HCT116 (cell line): ENCODE measurements at regions of chr14 and their contacts with region 1.

Region 1: GRCh38 chr14:68795597-68796417 is 2.9 kb upstream of the ZFP36L1 start:
- DNase-seq: no peak
- ATAC-seq: peak; percentile 68
- H3K4me3 ChIP-seq: peak overlapping the region; percentile 83 to 89
- H3K27ac ChIP-seq: peak overlapping the region; percentile 99
- H3K4me1 ChIP-seq: peaks cover 27 to 57% of the 10 kb centered on the region in 2 experiments
- H3K27me3 ChIP-seq: no peaks in the 10 kb centered on the region
- CTCF ChIP-seq: peak in 2 of 3 experiments; percentile 58 to 71; a peak in 4 of 6 replicates
- POLR2A ChIP-seq: no peak
- RAD21 ChIP-seq: no peak

Region 2: GRCh38 chr14:67787673-67788072 is 1008.1 kb before region 1 on chr14:
- CTCF ChIA-PET with region 1: no interaction called
- POLR2A ChIA-PET with region 1: no interaction called
- RAD21 ChIA-PET with region 1: no interaction called
- intact Hi-C with region 1: no loop called
- DNase-seq: no peak
- ATAC-seq: no peak
- H3K4me3 ChIP-seq: no peak overlapping the region
- H3K27ac ChIP-seq: no peak overlapping the region
- H3K4me1 ChIP-seq: no peaks in the 10 kb centered on the region
- H3K27me3 ChIP-seq: no peaks in the 10 kb centered on the region
- CTCF ChIP-seq: no peak
- POLR2A ChIP-seq: no peak
- RAD21 ChIP-seq: no peak

Region 3: DNA sequence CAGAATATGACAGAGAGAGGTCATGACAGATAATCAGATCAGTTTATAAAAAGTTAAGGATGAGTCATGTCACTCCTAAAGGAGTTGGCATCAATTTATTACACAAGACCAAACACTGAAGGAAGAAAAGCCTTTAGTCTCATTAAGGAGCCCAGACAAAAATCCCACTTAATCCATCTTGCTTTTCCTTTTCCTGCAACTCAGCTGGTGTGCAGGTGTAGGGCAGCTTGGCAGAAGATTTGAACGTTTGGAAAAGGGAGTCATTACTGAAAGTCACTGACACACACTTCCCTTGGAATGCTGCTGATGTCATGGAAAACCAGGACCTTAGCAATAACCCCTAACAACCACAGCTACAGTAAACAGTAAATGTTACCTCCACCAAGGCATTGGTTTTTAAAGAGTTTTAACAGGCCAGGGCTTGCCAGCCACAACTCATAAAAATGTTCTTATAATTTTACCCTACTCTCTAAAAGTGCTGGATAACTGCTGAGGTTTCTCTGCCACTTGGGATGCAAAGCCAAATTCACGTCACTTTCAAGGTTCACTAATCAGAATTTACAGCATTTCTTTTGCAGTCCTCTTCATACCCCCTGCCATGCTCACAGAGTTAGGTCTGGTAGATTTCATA is 655.6 kb before region 1 on chr14:
- CTCF ChIA-PET with region 1: no interaction called
- POLR2A ChIA-PET with region 1: interaction called, 5 read pairs
- RAD21 ChIA-PET with region 1: no interaction called
- intact Hi-C with region 1: loop called (anchors 5 kb)
- DNase-seq: peak; percentile 95
- ATAC-seq: peak; percentile 62
- H3K4me3 ChIP-seq: peak overlapping the region in 1 of 2 experiments; percentile 6; a peak in 1 of 4 replicates
- H3K27ac ChIP-seq: peak overlapping the region; percentile 99
- H3K4me1 ChIP-seq: peaks cover 84 to 86% of the 10 kb centered on the region in 2 experiments
- H3K27me3 ChIP-seq: no peaks in the 10 kb centered on the region
- CTCF ChIP-seq: no peak
- POLR2A ChIP-seq: no peak
- RAD21 ChIP-seq: peak; percentile 34

Region 4: GRCh38 chr14:68232300-68233055 is 563.3 kb before region 1 on chr14:
- CTCF ChIA-PET with region 1: no interaction called
- POLR2A ChIA-PET with region 1: no interaction called
- RAD21 ChIA-PET with region 1: no interaction called
- intact Hi-C with region 1: no loop called
- DNase-seq: peak; percentile 82
- ATAC-seq: peak; percentile 81
- H3K4me3 ChIP-seq: no peak overlapping the region
- H3K27ac ChIP-seq: peak overlapping the region; percentile 97
- H3K4me1 ChIP-seq: peaks cover 30 to 57% of the 10 kb centered on the region in 2 experiments
- H3K27me3 ChIP-seq: no peaks in the 10 kb centered on the region
- CTCF ChIP-seq: no peak
- POLR2A ChIP-seq: no peak
- RAD21 ChIP-seq: no peak

Region 5: DNA sequence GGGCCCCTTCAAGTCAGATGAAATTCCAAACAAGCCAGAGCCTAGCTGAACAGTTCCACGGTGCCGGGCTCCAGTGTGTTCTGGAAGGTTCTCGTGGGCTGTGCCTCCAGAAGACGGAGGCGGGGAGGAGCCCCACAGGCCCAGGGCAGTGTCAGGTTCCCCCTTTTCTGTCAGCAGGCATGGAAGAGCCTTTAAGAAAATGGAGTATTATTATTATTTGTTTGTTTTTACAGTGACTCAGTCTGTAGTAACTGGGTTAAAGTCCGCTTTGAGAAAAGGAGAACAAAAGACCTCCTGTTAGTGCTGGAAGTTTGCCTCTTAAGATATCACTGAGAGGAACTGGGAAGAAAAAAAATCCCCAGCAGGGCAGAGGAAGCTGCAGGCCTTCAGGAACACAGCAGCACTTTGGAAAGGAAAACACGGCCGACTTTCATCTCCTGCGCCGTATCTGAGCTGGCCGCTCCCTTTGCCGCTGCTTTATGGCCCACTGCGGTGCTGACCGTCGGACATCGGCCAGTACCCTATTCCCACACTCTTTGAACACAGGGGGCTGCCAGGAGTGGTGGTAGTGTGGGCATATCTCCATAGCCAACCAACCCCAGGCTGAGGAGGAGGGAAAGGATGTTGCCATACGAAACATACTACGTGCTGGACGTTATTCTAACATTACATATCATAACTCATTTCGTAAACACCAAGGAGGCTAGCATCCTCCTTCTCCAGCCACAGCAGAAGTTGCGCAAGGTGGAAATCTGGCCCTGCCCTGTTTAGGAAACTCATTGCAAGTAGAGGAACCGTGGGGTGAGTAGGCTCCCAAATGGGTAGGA is 197.0 kb before region 1 on chr14:
- CTCF ChIA-PET with region 1: interaction called, 3 read pairs
- POLR2A ChIA-PET with region 1: interaction called, 4 read pairs
- RAD21 ChIA-PET with region 1: no interaction called
- intact Hi-C with region 1: loop called (anchors 1 kb)
- DNase-seq: peak; percentile 97
- ATAC-seq: peak; percentile 87
- H3K4me3 ChIP-seq: peak overlapping the region; percentile 7 to 39; a peak in 3 of 4 replicates
- H3K27ac ChIP-seq: peak overlapping the region; percentile 94
- H3K4me1 ChIP-seq: peaks cover 45 to 72% of the 10 kb centered on the region in 2 experiments
- H3K27me3 ChIP-seq: no peaks in the 10 kb centered on the region
- CTCF ChIP-seq: no peak
- POLR2A ChIP-seq: no peak
- RAD21 ChIP-seq: peak; percentile 50; the same call in 1 of the 2 replicates

Region 6: GRCh38 chr14:68780358-68781160 is 15.2 kb before region 1 on chr14:
- CTCF ChIA-PET with region 1: interaction called, 3 read pairs
- POLR2A ChIA-PET with region 1: interaction called, 25 read pairs
- RAD21 ChIA-PET with region 1: no interaction called
- intact Hi-C with region 1: no loop called
- DNase-seq: no peak
- ATAC-seq: peak; percentile 5
- H3K4me3 ChIP-seq: peak overlapping the region; percentile 7 to 41
- H3K27ac ChIP-seq: peak overlapping the region; percentile 88
- H3K4me1 ChIP-seq: peaks cover 78 to 84% of the 10 kb centered on the region in 2 experiments
- H3K27me3 ChIP-seq: no peaks in the 10 kb centered on the region
- CTCF ChIP-seq: no peak
- POLR2A ChIP-seq: no peak
- RAD21 ChIP-seq: no peak

Region 7: DNA sequence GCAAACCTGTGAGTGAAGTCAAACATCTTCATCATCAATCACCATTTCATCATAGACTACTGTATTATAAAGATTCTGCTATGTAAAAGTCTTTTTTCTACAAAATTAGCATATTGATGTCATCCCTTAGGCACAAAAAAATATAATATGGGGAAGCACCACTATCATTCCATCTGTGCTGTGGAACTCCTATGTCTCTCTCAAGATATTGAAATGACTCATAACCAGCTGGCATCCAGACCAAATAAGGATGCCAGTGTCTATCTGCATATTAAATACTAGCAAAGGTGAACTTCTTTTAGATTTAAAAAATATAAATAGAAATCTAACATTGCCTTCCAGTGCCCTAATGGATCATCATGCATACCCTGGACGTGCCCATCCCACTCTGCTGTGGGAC is 375.0 kb after region 1 on chr14:
- CTCF ChIA-PET with region 1: no interaction called
- POLR2A ChIA-PET with region 1: no interaction called
- RAD21 ChIA-PET with region 1: no interaction called
- intact Hi-C with region 1: no loop called
- DNase-seq: no peak
- ATAC-seq: no peak
- H3K4me3 ChIP-seq: no peak overlapping the region
- H3K27ac ChIP-seq: no peak overlapping the region
- H3K4me1 ChIP-seq: no peaks in the 10 kb centered on the region
- H3K27me3 ChIP-seq: no peaks in the 10 kb centered on the region
- CTCF ChIP-seq: no peak
- POLR2A ChIP-seq: no peak
- RAD21 ChIP-seq: no peak